ENCODE measurements at regions of chr5 and their contacts with region 1.

Region 1: DNA sequence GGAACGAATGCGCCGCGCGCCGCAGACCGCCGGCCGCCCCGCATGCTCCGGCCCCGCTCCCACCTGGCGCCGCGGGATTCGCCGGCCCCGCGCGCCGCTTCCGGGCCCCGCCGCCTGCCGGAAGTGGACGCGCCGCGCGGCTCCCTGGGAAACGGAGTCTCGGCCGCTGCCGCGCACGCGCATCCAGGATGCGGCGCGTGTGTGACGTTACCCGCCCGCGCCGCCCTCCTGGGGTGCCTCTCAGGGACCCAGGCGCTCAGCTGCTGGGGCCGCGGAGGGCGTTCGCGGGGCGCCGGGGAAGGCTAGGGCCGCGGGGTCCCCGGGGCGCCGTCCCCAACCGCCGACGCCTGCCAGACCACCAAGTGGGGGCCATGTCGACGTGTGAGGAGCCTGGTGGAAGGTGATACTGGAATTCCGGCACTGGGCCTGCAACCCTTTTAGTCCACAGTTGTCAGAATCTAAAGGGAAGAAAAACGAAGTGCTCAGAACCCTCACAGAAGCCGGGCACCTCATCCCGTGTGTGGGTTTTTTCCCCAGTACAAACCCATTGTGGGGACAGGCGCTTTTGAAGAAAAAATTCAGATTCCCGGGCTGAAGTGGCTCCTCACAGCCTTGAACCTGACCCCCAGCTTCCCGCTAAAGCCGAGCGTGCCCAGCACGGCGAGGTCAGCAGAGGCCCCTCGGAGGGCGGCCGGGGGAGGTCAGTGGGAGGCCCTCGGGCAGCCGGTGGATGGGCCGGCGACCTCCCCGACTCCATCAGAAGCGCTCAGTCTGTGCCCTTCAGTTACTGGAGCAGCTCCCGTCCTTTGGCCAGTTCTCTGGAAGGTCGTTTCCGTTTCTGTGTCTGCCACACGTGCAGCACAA is at the start of gene CLPTM1L:
- DNase-seq: peak; percentile 69
- ATAC-seq: peak; percentile 86
- H3K4me3 ChIP-seq: peak within 1 kb of the TSS; percentile 72 to 91 (median 90)
- H3K27ac ChIP-seq: peak within 1 kb of the TSS; percentile 68
- H3K4me1 ChIP-seq: peaks cover 24% of the 10 kb centered on the region
- H3K27me3 ChIP-seq: no peaks in the 10 kb centered on the region
- CTCF ChIP-seq: no peak
- EP300 ChIP-seq: no peak
- POLR2A ChIP-seq: peak; percentile 51 to 70
- RAD21 ChIP-seq: 0 out of 2 replicates have a peak, but pooled peaks have one; percentile 8
- total RNA-seq, gene CLPTM1L: 65.4 and 124 TPM in 2 replicates

Region 2: DNA sequence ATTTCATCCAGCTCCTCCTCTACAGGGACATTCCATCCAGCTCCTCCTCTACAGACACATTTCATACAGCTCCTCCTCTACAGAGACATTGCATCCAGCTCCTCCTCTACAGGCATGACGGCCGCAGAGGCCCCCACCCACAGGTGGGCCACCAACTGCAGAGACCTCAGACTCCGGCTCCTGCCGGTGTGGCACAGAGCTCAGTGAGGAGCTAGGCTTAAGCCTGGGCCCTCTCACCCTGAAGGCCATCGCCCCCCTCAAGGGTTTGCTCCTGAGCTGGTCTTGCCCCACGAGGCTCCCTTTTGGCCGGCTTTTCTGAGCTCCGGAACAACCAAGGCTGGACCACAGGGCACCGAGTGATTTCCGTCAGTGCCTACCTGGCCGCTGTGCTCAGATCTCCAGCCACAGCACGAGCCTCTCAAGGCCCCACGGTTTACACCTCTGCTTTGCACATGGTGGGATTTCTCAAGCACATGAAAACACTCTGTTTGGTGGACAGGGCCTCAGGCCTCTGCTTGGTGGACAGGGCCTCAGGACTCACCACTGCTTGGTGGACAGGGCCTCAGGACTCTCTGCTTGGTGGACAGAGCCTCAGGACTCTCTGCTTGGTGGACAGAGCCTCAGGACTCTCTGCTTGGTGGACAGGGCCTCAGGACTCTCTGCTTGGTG is 16.2 kb before region 1 on chr5:
- CTCF ChIA-PET with region 1: no interaction called
- POLR2A ChIA-PET with region 1: interaction called, 12 read pairs
- in situ Hi-C with region 1: no loop called
- intact Hi-C with region 1: no loop called
- DNase-seq: no peak
- ATAC-seq: no peak
- H3K4me3 ChIP-seq: no peak overlapping the region
- H3K27ac ChIP-seq: no peak overlapping the region
- H3K4me1 ChIP-seq: peaks cover 28% of the 10 kb centered on the region
- H3K27me3 ChIP-seq: no peaks in the 10 kb centered on the region
- CTCF ChIP-seq: no peak
- EP300 ChIP-seq: no peak
- POLR2A ChIP-seq: no peak
- RAD21 ChIP-seq: no peak

Measured in HepG2 (cell line).